Motor neuron (in vitro differentiated cells): ENCODE measurements at regions of chr3 and their contacts with region 1.

Region 1: DNA sequence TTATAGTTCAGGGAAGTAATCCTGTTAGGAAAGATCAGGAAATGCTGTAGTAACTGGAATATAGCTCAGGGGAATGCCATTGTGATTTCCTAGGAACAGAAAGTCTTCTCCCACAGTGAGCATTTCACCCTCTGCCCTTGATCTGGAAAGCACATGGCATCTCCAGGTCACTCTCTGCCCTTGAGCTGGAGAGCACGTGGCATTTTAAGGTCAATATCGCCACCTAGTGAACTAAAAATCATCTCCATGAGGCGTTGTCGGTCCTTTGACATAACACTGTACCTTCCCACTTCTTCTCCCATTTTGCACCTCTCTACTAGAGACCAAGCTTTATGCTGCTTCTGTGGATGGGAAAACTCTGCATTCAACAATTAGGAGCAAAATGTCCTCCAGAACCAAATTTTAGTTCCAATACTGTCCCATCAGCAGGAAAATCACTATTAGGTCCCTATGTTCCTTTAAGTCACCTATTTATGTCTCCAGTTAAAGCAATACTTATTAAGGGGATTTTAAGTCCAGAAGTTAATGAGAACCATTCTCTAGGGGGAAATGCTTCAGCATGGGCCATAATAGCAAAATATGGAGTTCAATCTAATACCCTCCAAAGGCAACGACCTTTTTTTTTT is 54.7 kb upstream of the GK5 start:
- ATAC-seq: peak; percentile 92 to 99 (median 96)
- H3K4me3 ChIP-seq: no peak overlapping the region
- H3K27ac ChIP-seq: no peak overlapping the region
- H3K4me1 ChIP-seq: no peaks in the 10 kb centered on the region

Region 2: GRCh38 chr3:141686466-141687291 is 593.4 kb before region 1 on chr3:
- in situ Hi-C with region 1: no loop called
- ATAC-seq: peak; percentile 35 to 92 (median 70)
- H3K4me3 ChIP-seq: no peak overlapping the region
- H3K27ac ChIP-seq: no peak overlapping the region
- H3K4me1 ChIP-seq: no peaks in the 10 kb centered on the region

Region 3: GRCh38 chr3:142148792-142149672 is 131.0 kb before region 1 on chr3 and contains the start of gene TFDP2:
- in situ Hi-C with region 1: loop called in 2 of 9 experiments (anchors 25 kb)
- ATAC-seq: peak; percentile 93 to 99 (median 99)
- H3K4me3 ChIP-seq: peak within 1 kb of the TSS; percentile 59 to 84 (median 78)
- H3K27ac ChIP-seq: peak within 1 kb of the TSS; percentile 30 to 56
- H3K4me1 ChIP-seq: peaks cover 0 to 10% of the 10 kb centered on the region in 2 donors
- total RNA-seq, gene TFDP2: 25.7 to 69.0 (median 30.3) TPM